Activated CD4-positive, alpha-beta memory T cell treated with anti-CD3 and anti-CD28 coated beads, Interleukin-2, amount 10 ng/mL, durations not matched to agents 7 days and 5 days (primary cell): ENCODE measurements at regions of chr17 and their contacts with region 1.

Region 1: GRCh38 chr17:59829217-59830006 is 63.3 kb downstream of the TUBD1 start:
- DNase-seq: peak; percentile 62
- H3K4me3 Mint-ChIP-seq: peak overlapping the region; percentile 77
- H3K27ac Mint-ChIP-seq: peak overlapping the region; percentile 96
- H3K4me1 Mint-ChIP-seq: peaks cover 77% of the 10 kb centered on the region
- H3K27me3 Mint-ChIP-seq: no peaks in the 10 kb centered on the region

Region 2: GRCh38 chr17:58337600-58338453 is 1491.6 kb before region 1 on chr17:
- CTCF ChIA-PET with region 1: no interaction called
- POLR2A ChIA-PET with region 1: interaction called, 30 read pairs
- DNase-seq: peak; percentile 96
- H3K4me3 Mint-ChIP-seq: peak overlapping the region; percentile 98
- H3K27ac Mint-ChIP-seq: peak overlapping the region; percentile 100
- H3K4me1 Mint-ChIP-seq: peaks cover 52% of the 10 kb centered on the region
- H3K27me3 Mint-ChIP-seq: no peaks in the 10 kb centered on the region

Region 3: DNA sequence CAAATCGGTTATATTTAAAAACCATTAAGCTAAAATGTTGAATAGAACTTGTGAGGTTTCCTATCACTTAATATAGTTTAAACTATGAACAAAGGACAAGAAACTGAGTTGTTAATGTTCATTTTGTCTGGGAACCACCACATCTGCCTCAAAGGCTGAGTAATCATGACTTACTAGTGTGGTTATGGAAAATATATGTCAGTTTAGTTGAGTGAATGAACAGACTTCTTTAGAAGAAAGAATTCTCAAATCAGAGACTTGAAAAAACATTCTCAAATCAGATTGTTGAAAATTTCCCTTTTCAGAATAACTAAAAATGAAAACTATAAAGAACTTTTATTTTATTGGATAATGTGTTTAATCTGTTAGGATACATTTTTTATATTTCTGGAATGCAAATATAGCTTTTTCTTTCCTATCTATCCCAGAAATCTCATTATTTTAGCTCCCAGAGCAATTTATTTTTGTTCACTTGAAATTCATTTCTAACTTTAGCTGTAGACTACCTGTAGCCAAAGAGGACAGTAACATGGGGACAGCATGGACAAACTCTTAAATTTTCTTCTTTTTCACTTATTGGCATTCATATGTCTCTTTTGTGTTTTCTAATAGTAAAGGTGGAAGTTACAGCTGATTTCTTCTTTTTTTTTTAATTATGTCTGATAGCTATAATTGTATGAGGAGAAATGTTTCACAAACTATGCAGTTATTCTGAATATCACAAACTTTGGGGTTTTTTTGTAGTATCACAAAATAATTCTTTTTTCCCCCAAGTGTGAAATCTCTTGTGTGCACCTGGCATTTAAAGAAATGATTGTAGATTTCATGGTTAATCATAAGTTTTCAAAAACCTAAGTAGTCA is 66.7 kb before region 1 on chr17:
- CTCF ChIA-PET with region 1: interaction called, 3 read pairs
- POLR2A ChIA-PET with region 1: interaction called, 121 read pairs
- DNase-seq: no peak
- H3K4me3 Mint-ChIP-seq: peak overlapping the region; percentile 11
- H3K27ac Mint-ChIP-seq: peak overlapping the region; percentile 83
- H3K4me1 Mint-ChIP-seq: peaks cover 49% of the 10 kb centered on the region
- H3K27me3 Mint-ChIP-seq: no peaks in the 10 kb centered on the region

Region 4: DNA sequence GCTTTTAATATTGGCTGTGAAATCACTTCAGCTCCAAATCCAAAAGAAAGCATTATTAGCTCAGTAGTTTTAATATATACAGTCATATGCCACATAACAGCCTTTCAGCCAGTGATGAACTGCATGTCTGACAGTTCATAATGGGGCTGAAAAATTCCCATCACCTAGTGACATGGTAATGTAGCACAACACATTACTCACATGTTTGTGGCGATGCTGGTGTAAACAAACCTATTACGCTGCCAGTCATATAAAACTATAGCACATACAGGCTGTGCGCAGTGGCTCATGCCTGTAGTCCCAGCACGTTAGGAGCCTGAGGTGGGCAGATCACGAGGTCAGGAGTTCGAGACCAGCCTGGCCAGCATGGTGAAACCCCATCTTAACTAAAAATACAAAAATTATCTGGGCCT is 28.9 kb before region 1 on chr17:
- CTCF ChIA-PET with region 1: interaction called, 6 read pairs
- POLR2A ChIA-PET with region 1: interaction called, 2,499 read pairs
- DNase-seq: no peak
- H3K4me3 Mint-ChIP-seq: no peak overlapping the region
- H3K27ac Mint-ChIP-seq: no peak overlapping the region
- H3K4me1 Mint-ChIP-seq: peaks cover 44% of the 10 kb centered on the region
- H3K27me3 Mint-ChIP-seq: no peaks in the 10 kb centered on the region

Region 5: DNA sequence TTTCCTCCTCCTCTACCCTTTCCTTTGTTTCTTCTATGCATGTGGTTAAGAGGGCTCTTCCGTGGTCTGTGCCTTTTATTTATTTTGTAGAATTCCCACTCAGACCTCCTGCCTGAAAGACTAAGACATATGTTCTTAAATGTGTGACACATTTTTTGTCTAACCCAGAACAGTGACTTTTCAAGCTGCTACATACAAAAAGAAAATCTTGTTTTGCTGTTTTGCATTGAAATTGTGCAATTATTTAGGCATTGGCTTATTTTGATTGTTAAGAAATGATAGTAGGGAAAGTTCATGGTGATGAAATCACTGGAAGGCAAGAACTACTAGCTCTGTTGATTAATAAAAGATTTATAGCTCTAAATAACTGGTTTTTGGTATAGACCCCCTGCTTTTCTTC is 13.4 kb before region 1 on chr17:
- CTCF ChIA-PET with region 1: interaction called, 4 read pairs
- POLR2A ChIA-PET with region 1: interaction called, 12 read pairs
- DNase-seq: no peak
- H3K4me3 Mint-ChIP-seq: no peak overlapping the region
- H3K27ac Mint-ChIP-seq: no peak overlapping the region
- H3K4me1 Mint-ChIP-seq: peaks cover 28% of the 10 kb centered on the region
- H3K27me3 Mint-ChIP-seq: no peaks in the 10 kb centered on the region

Region 6: DNA sequence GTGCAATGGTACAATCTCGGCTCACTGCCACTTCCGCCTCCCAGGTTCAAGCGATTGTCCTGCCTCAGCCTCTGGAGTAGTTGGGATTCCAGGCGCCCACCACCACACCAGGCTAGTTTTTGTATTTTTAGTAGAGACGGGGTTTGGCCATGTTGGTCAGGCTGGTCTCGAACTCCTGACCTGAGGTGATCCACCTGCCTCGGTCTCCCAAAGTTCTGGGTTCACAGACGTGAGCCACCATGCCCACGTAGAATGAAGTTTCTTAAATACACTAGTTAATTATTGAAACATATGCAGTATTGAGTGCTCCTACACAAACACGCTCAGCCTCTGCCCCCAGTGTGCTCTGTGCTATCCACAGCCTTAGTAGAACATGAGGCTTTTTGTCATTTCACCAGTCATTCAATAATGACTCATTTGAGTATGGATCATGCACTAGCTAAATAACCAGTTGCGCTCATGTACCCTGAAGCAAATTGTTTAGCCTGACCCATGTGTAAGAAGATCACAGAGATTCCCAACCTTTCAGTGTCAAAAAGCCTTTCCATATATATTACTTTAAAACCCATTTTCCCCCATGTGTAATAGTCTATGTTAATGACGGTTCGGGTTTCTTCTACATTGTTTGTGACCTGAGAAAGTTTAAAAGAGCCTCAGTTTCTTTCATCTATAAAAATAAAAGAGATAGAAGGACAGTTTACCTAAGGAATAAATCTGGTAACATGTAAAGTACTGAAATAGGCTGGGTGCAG is 13.7 kb after region 1 on chr17:
- CTCF ChIA-PET with region 1: interaction called, 26 read pairs
- POLR2A ChIA-PET with region 1: interaction called, 1,206 read pairs
- DNase-seq: peak; percentile 72
- H3K4me3 Mint-ChIP-seq: peak overlapping the region; percentile 100
- H3K27ac Mint-ChIP-seq: peak overlapping the region; percentile 99
- H3K4me1 Mint-ChIP-seq: peaks cover 57% of the 10 kb centered on the region
- H3K27me3 Mint-ChIP-seq: no peaks in the 10 kb centered on the region

Region 7: GRCh38 chr17:59892924-59893676 is 63.7 kb after region 1 on chr17 and contains the starts of genes RPS6KB1 and TUBD1:
- CTCF ChIA-PET with region 1: no interaction called
- POLR2A ChIA-PET with region 1: interaction called, 15 read pairs
- DNase-seq: peak; percentile 98
- H3K4me3 Mint-ChIP-seq: peak within 1 kb of the TSS; percentile 100
- H3K27ac Mint-ChIP-seq: peak within 1 kb of the TSS; percentile 96
- H3K4me1 Mint-ChIP-seq: peaks cover 56% of the 10 kb centered on the region
- H3K27me3 Mint-ChIP-seq: no peaks in the 10 kb centered on the region
- total RNA-seq, gene RPS6KB1: 44.3 to 50.1 TPM
- total RNA-seq, gene TUBD1: 11.4 to 11.7 TPM

Region 8: GRCh38 chr17:59954856-59955255 is 125.4 kb after region 1 on chr17:
- CTCF ChIA-PET with region 1: no interaction called
- POLR2A ChIA-PET with region 1: no interaction called
- DNase-seq: no peak
- H3K4me3 Mint-ChIP-seq: no peak overlapping the region
- H3K27ac Mint-ChIP-seq: no peak overlapping the region
- H3K4me1 Mint-ChIP-seq: peaks cover 2% of the 10 kb centered on the region
- H3K27me3 Mint-ChIP-seq: no peaks in the 10 kb centered on the region